Panc1 (cell line): ENCODE measurements at regions of chr2 and their contacts with region 1.

Region 1: GRCh38 chr2:140863713-140864112 is 1267.1 kb downstream of the LRP1B start:
- DNase-seq: peak; percentile 39
- ATAC-seq: no peak
- H3K4me3 ChIP-seq: no peak overlapping the region
- H3K27ac ChIP-seq: no peak overlapping the region
- H3K4me1 ChIP-seq: no peaks in the 10 kb centered on the region
- H3K27me3 ChIP-seq: no peaks in the 10 kb centered on the region
- CTCF ChIP-seq: peak; percentile 45; the same call in 1 of the 2 replicates

Region 2: GRCh38 chr2:139790807-139791752 is 1072.6 kb before region 1 on chr2:
- CTCF ChIA-PET with region 1: no interaction called
- POLR2A ChIA-PET with region 1: no interaction called
- in situ Hi-C with region 1: no loop called
- intact Hi-C with region 1: loop called (anchors 10 kb)
- DNase-seq: peak; percentile 2
- ATAC-seq: no peak
- H3K4me3 ChIP-seq: no peak overlapping the region
- H3K27ac ChIP-seq: no peak overlapping the region
- H3K4me1 ChIP-seq: no peaks in the 10 kb centered on the region
- H3K27me3 ChIP-seq: no peaks in the 10 kb centered on the region
- CTCF ChIP-seq: peak; percentile 39; the same call in 1 of the 2 replicates

Region 3: GRCh38 chr2:140990416-140990815 is 126.7 kb after region 1 on chr2:
- CTCF ChIA-PET with region 1: no interaction called
- POLR2A ChIA-PET with region 1: no interaction called
- in situ Hi-C with region 1: no loop called
- intact Hi-C with region 1: no loop called
- DNase-seq: peak; percentile 17
- ATAC-seq: peak; percentile 70; the same call in 1 of the 2 replicates
- H3K4me3 ChIP-seq: no peak overlapping the region
- H3K27ac ChIP-seq: no peak overlapping the region
- H3K4me1 ChIP-seq: no peaks in the 10 kb centered on the region; the same call in 1 of the 2 replicates
- H3K27me3 ChIP-seq: no peaks in the 10 kb centered on the region
- CTCF ChIP-seq: no peak